ENCODE measurements at regions of chr4 and their contacts with region 1.

Region 1: GRCh38 chr4:25986807-25987206 is 72.8 kb downstream of the SMIM20 start:
- DNase-seq: no peak
- H3K4me3 ChIP-seq: no peak overlapping the region
- H3K27ac ChIP-seq: no peak overlapping the region
- H3K4me1 ChIP-seq: no peaks in the 10 kb centered on the region
- H3K27me3 ChIP-seq: no peaks in the 10 kb centered on the region
- CTCF ChIP-seq: no peak

Region 2: DNA sequence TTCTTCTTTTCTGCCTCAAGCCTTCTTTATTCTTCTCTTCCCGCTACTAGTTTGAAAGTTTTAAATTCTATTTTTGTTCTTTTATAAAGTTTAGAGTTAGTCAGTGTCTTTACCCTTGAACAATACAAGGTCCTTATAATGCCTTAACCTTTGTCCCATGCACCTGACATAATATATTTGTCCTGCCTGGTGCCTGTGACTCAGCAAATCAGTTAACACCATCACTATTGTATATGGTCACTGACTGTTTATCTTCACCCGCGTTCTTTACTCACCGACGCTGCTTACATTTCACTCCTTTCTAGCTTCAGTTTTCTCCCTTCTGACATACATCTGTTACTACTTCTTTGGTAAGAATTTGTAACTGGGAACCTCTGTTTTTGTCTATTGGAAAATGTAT is 67.1 kb before region 1 on chr4:
- intact Hi-C with region 1: loop called (anchors 5 kb)
- DNase-seq: peak; percentile 51
- H3K4me3 ChIP-seq: no peak overlapping the region
- H3K27ac ChIP-seq: peak overlapping the region; percentile 34
- H3K4me1 ChIP-seq: peaks cover 4% of the 10 kb centered on the region
- H3K27me3 ChIP-seq: no peaks in the 10 kb centered on the region
- CTCF ChIP-seq: no peak